ENCODE measurements at regions of chr2 and their contacts with region 1.

Region 1: DNA sequence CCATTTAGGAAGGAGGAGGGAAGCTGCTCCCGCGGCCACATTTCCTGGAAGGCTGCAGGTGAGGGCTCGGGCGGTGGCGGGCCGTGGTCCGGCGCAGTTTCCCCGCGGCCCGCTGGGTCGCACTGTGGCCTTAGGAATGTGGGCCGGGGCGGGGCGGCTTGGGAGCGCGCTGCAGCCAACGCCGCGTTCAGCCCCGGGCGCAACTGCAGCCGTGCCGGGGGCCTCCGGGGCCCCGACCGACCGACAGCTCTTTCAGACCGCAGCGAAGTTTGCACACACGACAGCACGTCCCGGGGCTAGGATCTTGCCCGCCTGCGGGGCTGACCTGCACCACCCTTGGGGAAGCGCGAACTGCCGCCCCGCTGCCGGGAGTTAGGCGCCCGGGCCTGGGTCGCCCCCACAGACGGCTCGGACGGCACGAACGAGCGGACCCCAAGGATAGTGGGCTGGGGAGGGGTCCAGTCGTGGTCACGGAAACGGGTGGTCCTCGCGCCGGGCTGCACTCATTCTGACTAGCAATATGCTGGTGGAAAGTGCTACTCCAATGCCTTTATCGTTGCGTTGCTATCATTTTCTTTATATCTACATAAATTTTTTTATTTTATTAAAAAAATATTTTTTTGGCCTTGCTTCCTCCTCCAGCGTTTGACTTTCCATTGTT is 69.9 kb upstream of the DLX2 start:
- DNase-seq: peak; percentile 87
- ATAC-seq: peak; percentile 99
- H3K4me3 Mint-ChIP-seq: peak overlapping the region; percentile 67
- H3K27ac Mint-ChIP-seq: no peak overlapping the region
- H3K4me1 Mint-ChIP-seq: peaks cover 19% of the 10 kb centered on the region
- H3K27me3 Mint-ChIP-seq: peaks cover 10% of the 10 kb centered on the region
- CTCF ChIP-seq: 0 out of 2 replicates have a peak, but pooled peaks have one; percentile 44

Region 2: GRCh38 chr2:172162225-172162733 is 10.4 kb before region 1 on chr2:
- CTCF ChIA-PET with region 1: interaction called, 10 read pairs
- POLR2A ChIA-PET with region 1: no interaction called
- DNase-seq: no peak
- ATAC-seq: peak; percentile 67
- H3K4me3 Mint-ChIP-seq: no peak overlapping the region
- H3K27ac Mint-ChIP-seq: no peak overlapping the region
- H3K4me1 Mint-ChIP-seq: 0 out of 2 replicates have a peak, but pooled peaks cover under 1% of the 10 kb centered on the region
- H3K27me3 Mint-ChIP-seq: peaks cover 6% of the 10 kb centered on the region
- CTCF ChIP-seq: no peak

Region 3: GRCh38 chr2:172380436-172381274 is 208.0 kb after region 1 on chr2:
- CTCF ChIA-PET with region 1: interaction called, 10 read pairs
- POLR2A ChIA-PET with region 1: interaction called, 3 read pairs
- DNase-seq: peak; percentile 75
- ATAC-seq: peak; percentile 85
- H3K4me3 Mint-ChIP-seq: peak overlapping the region; percentile 47
- H3K27ac Mint-ChIP-seq: peak overlapping the region; percentile 100
- H3K4me1 Mint-ChIP-seq: peaks cover 71% of the 10 kb centered on the region
- H3K27me3 Mint-ChIP-seq: peaks cover 33% of the 10 kb centered on the region
- CTCF ChIP-seq: no peak

Region 4: GRCh38 chr2:172484253-172484652 is 311.6 kb after region 1 on chr2:
- CTCF ChIA-PET with region 1: interaction called, 34 read pairs
- POLR2A ChIA-PET with region 1: interaction called, 3 read pairs
- DNase-seq: no peak
- ATAC-seq: no peak
- H3K4me3 Mint-ChIP-seq: no peak overlapping the region
- H3K27ac Mint-ChIP-seq: no peak overlapping the region
- H3K4me1 Mint-ChIP-seq: 0 out of 2 replicates have a peak, but pooled peaks cover 3% of the 10 kb centered on the region
- H3K27me3 Mint-ChIP-seq: no peaks in the 10 kb centered on the region
- CTCF ChIP-seq: no peak